T-cell (primary cell): ENCODE measurements at regions of chr10 and their contacts with region 1.

Region 1: DNA sequence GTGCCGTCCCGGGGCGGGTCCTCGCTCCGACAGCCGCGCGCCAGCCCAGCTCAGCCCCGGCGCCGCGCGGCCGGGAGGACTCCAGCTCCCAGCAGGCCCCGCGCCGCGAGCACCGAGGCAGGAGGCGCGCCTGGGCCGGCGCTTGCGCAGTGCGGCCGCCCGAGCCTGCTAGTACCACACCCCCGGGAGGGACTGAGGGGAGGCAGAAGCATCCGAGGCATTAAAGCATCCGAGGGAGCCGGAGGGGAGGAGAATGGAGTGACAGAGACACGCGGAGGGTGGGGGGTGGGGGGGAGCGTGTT is at the start of gene GRK5:
- DNase-seq: peak; percentile 88 to 99 (median 96)
- ATAC-seq: peak; percentile 82 to 86 (median 82)
- H3K4me3 ChIP-seq: peak within 1 kb of the TSS; percentile 65 to 98
- H3K4me3 Mint-ChIP-seq: peak within 1 kb of the TSS; percentile 87 to 96 (median 92)
- H3K27ac ChIP-seq: peak within 1 kb of the TSS; percentile 74
- H3K27ac Mint-ChIP-seq: peak within 1 kb of the TSS; percentile 92 to 97
- H3K4me1 ChIP-seq: peaks cover 29 to 38% of the 10 kb centered on the region in 2 experiments
- H3K4me1 Mint-ChIP-seq: peaks cover 38 to 48% (median 46%) of the 10 kb centered on the region in 3 donors
- H3K27me3 ChIP-seq: no peaks in the 10 kb centered on the region
- H3K27me3 Mint-ChIP-seq: no peaks in the 10 kb centered on the region
- total RNA-seq, gene GRK5: 21.7 to 36.8 (median 30.6) TPM

Region 2: DNA sequence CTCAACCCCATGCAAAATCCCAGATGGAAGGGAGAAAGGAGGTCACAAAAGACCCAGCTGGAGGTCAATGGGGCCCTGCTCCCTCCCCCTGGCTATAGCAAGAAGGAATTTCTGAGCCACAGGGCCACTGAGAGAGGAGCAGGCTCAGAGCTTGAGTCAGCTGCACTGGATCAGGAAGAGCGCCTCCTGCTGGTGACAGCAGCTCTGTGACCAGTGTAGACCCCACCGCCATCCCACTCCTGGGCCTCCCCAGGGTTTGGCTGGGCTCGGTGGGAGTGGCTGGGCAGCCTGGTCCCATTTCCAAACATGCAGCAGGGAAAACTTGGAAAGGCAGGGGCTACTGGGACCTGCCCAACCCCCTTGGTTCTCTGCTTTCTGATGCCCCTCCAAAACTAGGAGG is 580.4 kb before region 1 on chr10:
- CTCF ChIA-PET with region 1: no interaction called
- POLR2A ChIA-PET with region 1: no interaction called
- DNase-seq: peak in 1 of 35 experiments; percentile 12
- ATAC-seq: no peak
- H3K4me3 ChIP-seq: no peak overlapping the region
- H3K4me3 Mint-ChIP-seq: no peak overlapping the region
- H3K27ac ChIP-seq: no peak overlapping the region
- H3K27ac Mint-ChIP-seq: no peak overlapping the region
- H3K4me1 ChIP-seq: peaks cover under 1 to 5% of the 10 kb centered on the region in 2 experiments
- H3K4me1 Mint-ChIP-seq: peaks cover 2 to 8% (median 2%) of the 10 kb centered on the region in 3 donors
- H3K27me3 ChIP-seq: peaks cover 0 to 8% of the 10 kb centered on the region in 2 experiments
- H3K27me3 Mint-ChIP-seq: peaks cover 0 to 9% of the 10 kb centered on the region in 2 donors

Region 3: GRCh38 chr10:119253433-119254174 is 46.3 kb after region 1 on chr10:
- CTCF ChIA-PET with region 1: no interaction called
- POLR2A ChIA-PET with region 1: no interaction called
- DNase-seq: no peak
- ATAC-seq: no peak
- H3K4me3 ChIP-seq: no peak overlapping the region
- H3K4me3 Mint-ChIP-seq: no peak overlapping the region
- H3K27ac ChIP-seq: no peak overlapping the region
- H3K27ac Mint-ChIP-seq: peak overlapping the region in 1 of 2 donors; percentile 11
- H3K4me1 ChIP-seq: peaks cover 0 to 2% of the 10 kb centered on the region in 2 experiments
- H3K4me1 Mint-ChIP-seq: peaks cover 27 to 48% (median 40%) of the 10 kb centered on the region in 3 donors
- H3K27me3 ChIP-seq: no peaks in the 10 kb centered on the region
- H3K27me3 Mint-ChIP-seq: no peaks in the 10 kb centered on the region

Region 4: DNA sequence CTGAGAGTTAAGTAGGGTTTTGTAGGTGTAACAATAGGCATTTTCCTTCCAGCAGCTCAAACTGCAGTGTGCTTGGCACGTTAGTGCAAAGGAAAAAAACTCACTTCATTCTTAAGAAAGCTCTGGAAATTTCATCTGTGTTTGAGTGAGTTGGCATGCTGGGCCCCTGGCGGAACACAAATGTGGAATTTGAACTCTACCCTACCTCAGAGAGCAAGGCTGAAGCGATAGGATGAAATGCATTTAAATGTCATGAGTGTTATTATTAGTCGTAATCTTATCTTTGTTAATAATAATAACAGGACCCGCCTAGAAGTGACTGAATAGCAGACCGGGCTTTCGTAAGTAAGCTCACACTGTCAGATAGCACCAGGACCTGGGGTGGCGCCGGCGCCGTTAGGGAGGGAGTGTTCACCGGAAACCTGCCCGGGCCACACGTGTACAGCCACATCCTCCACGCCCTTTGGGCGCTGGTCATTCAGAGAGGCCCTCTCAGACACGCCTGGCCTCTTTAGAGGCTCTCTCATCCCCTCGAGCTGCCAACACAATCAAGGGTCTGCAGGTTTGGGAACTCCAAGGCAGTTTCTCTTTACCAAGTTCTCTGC is 63.5 kb after region 1 on chr10:
- CTCF ChIA-PET with region 1: interaction called, 6 to 10 read pairs
- POLR2A ChIA-PET with region 1: interaction called, 4 to 10 read pairs
- DNase-seq: peak in 34 of 35 experiments; percentile 26 to 69 (median 48)
- ATAC-seq: peak in 2 of 4 experiments; percentile 39 to 47
- H3K4me3 ChIP-seq: peak overlapping the region; percentile 23 to 27
- H3K4me3 Mint-ChIP-seq: peak overlapping the region; percentile 51 to 54 (median 54)
- H3K27ac ChIP-seq: peak overlapping the region; percentile 96
- H3K27ac Mint-ChIP-seq: peak overlapping the region; percentile 91 to 95
- H3K4me1 ChIP-seq: peaks cover 33 to 69% of the 10 kb centered on the region in 2 experiments
- H3K4me1 Mint-ChIP-seq: peaks cover 70 to 85% (median 73%) of the 10 kb centered on the region in 3 donors
- H3K27me3 ChIP-seq: no peaks in the 10 kb centered on the region
- H3K27me3 Mint-ChIP-seq: no peaks in the 10 kb centered on the region

Region 5: GRCh38 chr10:119305860-119306513 is 98.7 kb after region 1 on chr10:
- CTCF ChIA-PET with region 1: interaction called, 6 to 12 read pairs
- POLR2A ChIA-PET with region 1: interaction called, 3 read pairs
- DNase-seq: peak; percentile 50 to 89 (median 74)
- ATAC-seq: peak; percentile 76 to 89 (median 88)
- H3K4me3 ChIP-seq: peak overlapping the region; percentile 29 to 44
- H3K4me3 Mint-ChIP-seq: peak overlapping the region; percentile 84 to 89 (median 84)
- H3K27ac ChIP-seq: peak overlapping the region; percentile 97
- H3K27ac Mint-ChIP-seq: peak overlapping the region; percentile 97 to 98
- H3K4me1 ChIP-seq: peaks cover 24 to 83% of the 10 kb centered on the region in 2 experiments
- H3K4me1 Mint-ChIP-seq: peaks cover 59 to 87% (median 68%) of the 10 kb centered on the region in 3 donors
- H3K27me3 ChIP-seq: peaks cover 0 to 15% of the 10 kb centered on the region in 2 experiments
- H3K27me3 Mint-ChIP-seq: no peaks in the 10 kb centered on the region

Region 6: DNA sequence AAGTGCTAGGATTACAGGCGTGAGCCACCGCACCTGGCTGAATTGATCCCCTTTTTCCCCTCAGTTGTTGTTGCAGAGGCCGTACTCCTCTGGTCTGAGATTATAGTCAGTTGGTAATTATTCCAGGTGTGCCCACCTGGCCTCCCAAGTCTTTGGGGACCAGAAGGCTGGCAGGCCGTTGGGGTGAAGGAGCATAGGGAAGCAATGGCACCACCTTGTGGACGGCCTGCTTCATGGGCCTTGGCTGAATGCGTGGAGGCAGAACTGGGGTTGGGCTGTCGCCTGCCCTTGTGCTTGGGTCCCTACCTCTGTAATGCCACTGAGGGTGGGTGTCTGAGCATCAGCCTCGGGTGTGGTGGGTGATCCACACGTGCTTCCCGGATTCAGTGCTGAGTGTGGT is 209.5 kb after region 1 on chr10:
- CTCF ChIA-PET with region 1: interaction called, 5 to 11 read pairs
- POLR2A ChIA-PET with region 1: interaction called in 1 of 2 experiments, 3 read pairs
- DNase-seq: peak; percentile 36 to 83 (median 63)
- ATAC-seq: peak; percentile 71 to 85 (median 83)
- H3K4me3 ChIP-seq: no peak overlapping the region
- H3K4me3 Mint-ChIP-seq: no peak overlapping the region
- H3K27ac ChIP-seq: no peak overlapping the region
- H3K27ac Mint-ChIP-seq: no peak overlapping the region
- H3K4me1 ChIP-seq: peaks cover 0 to 6% of the 10 kb centered on the region in 2 experiments
- H3K4me1 Mint-ChIP-seq: peaks cover 0 to 5% (median 2%) of the 10 kb centered on the region in 3 donors
- H3K27me3 ChIP-seq: no peaks in the 10 kb centered on the region
- H3K27me3 Mint-ChIP-seq: no peaks in the 10 kb centered on the region

Region 7: GRCh38 chr10:119423510-119424257 is 216.4 kb after region 1 on chr10:
- CTCF ChIA-PET with region 1: interaction called in 1 of 2 experiments, 3 read pairs
- POLR2A ChIA-PET with region 1: interaction called in 1 of 2 experiments, 12 read pairs
- DNase-seq: no peak
- ATAC-seq: no peak
- H3K4me3 ChIP-seq: no peak overlapping the region
- H3K4me3 Mint-ChIP-seq: no peak overlapping the region
- H3K27ac ChIP-seq: no peak overlapping the region
- H3K27ac Mint-ChIP-seq: no peak overlapping the region
- H3K4me1 ChIP-seq: peaks cover 3 to 9% of the 10 kb centered on the region in 2 experiments
- H3K4me1 Mint-ChIP-seq: peaks cover 5 to 6% (median 6%) of the 10 kb centered on the region in 3 donors
- H3K27me3 ChIP-seq: no peaks in the 10 kb centered on the region
- H3K27me3 Mint-ChIP-seq: no peaks in the 10 kb centered on the region